Adrenal gland (tissue), 19 donors: ENCODE measurements at regions of chr10 and their contacts with region 1.

Region 1: GRCh38 chr10:118568327-118568848 is 27.1 kb downstream of the PRLHR start:
- DNase-seq: peak in 6 of 7 donors; percentile 44 to 77 (median 72)
- H3K4me3 ChIP-seq: peak overlapping the region in 1 of 4 donors; percentile 34
- H3K27ac ChIP-seq: no peak overlapping the region
- H3K4me1 ChIP-seq: peaks cover 0 to 7% of the 10 kb centered on the region in 2 donors
- H3K27me3 ChIP-seq: no peaks in the 10 kb centered on the region
- CTCF ChIP-seq: peak; percentile 80 to 99 (median 90)
- POLR2A ChIP-seq: no peak

Region 2: GRCh38 chr10:118272149-118272721 is 296.2 kb before region 1 on chr10:
- intact Hi-C with region 1: no loop called
- DNase-seq: peak in 1 of 7 donors; percentile 19
- H3K4me3 ChIP-seq: peak overlapping the region in 1 of 4 donors; percentile 9
- H3K27ac ChIP-seq: no peak overlapping the region
- H3K4me1 ChIP-seq: no peaks in the 10 kb centered on the region
- H3K27me3 ChIP-seq: no peaks in the 10 kb centered on the region
- CTCF ChIP-seq: no peak
- POLR2A ChIP-seq: no peak

Region 3: GRCh38 chr10:118720685-118721538 is 152.5 kb after region 1 on chr10:
- intact Hi-C with region 1: loop called (anchors 5 kb)
- DNase-seq: peak in 6 of 7 donors; percentile 43 to 85 (median 66)
- H3K4me3 ChIP-seq: no peak overlapping the region
- H3K27ac ChIP-seq: no peak overlapping the region
- H3K4me1 ChIP-seq: peaks cover 11 to 26% of the 10 kb centered on the region in 2 donors
- H3K27me3 ChIP-seq: no peaks in the 10 kb centered on the region
- CTCF ChIP-seq: peak; percentile 79 to 89 (median 84)
- POLR2A ChIP-seq: no peak

Region 4: GRCh38 chr10:118800920-118801319 is 232.5 kb after region 1 on chr10:
- intact Hi-C with region 1: loop called in 1 of 2 experiments (anchors 5 kb)
- DNase-seq: peak in 5 of 7 donors; percentile 35 to 78 (median 48)
- H3K4me3 ChIP-seq: no peak overlapping the region
- H3K27ac ChIP-seq: no peak overlapping the region
- H3K4me1 ChIP-seq: peaks cover 0 to 5% of the 10 kb centered on the region in 2 donors
- H3K27me3 ChIP-seq: no peaks in the 10 kb centered on the region
- CTCF ChIP-seq: peak; percentile 29 to 62 (median 56)
- POLR2A ChIP-seq: no peak

Region 5: GRCh38 chr10:118850418-118851061 is 282.2 kb after region 1 on chr10:
- intact Hi-C with region 1: loop called in 1 of 2 experiments (anchors 5 kb)
- DNase-seq: peak; percentile 76 to 93 (median 89)
- H3K4me3 ChIP-seq: no peak overlapping the region
- H3K27ac ChIP-seq: no peak overlapping the region
- H3K4me1 ChIP-seq: no peaks in the 10 kb centered on the region
- H3K27me3 ChIP-seq: no peaks in the 10 kb centered on the region
- CTCF ChIP-seq: peak; percentile 62 to 75 (median 69)
- POLR2A ChIP-seq: no peak

Region 6: DNA sequence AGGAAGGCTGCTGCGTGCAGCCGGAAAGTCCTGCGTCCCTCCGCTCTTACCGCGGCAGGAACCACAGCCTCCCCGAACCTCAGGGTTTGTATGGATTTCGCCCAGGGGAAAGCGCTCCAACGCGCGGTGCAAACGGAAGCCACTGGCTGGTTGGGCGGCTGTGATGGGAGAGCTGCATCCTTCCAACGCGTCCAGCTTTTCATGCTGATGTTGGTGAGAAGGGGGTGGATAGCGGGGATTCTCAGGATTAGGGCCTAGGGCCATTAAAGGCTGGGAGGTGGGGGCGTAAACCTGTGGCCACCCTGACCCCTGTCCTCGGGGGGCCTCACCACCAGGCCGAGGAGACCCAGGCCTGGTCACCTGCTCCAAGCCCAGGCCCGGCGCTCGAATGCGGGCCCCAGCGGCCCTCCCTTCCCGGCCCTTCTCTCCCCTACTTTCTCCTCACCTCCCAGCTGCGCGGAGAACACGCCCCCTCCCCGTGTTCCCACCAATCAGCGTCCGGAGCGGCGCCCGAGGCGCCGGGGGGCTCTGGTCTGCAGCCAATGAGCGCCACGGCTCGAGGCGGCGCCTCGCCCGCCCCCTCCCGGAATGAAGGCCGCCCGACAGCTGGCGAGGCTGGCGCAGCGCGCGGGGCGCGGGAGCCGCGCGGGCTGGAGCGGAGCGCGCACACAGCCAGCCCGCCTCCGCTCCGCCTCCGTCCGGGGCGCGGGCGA is 460.7 kb after region 1 on chr10:
- intact Hi-C with region 1: loop called in 1 of 2 experiments (anchors 10 kb)
- DNase-seq: peak; percentile 91 to 96 (median 93)
- H3K4me3 ChIP-seq: peak overlapping the region in 2 of 4 donors; percentile 0 to 71
- H3K27ac ChIP-seq: peak overlapping the region in 4 of 5 donors; percentile 4 to 88 (median 70)
- H3K4me1 ChIP-seq: peaks cover 13 to 15% of the 10 kb centered on the region in 2 donors
- H3K27me3 ChIP-seq: no peaks in the 10 kb centered on the region
- CTCF ChIP-seq: peak in 4 of 6 experiments; percentile 14 to 50 (median 38)
- POLR2A ChIP-seq: no peak